ENCODE measurements at regions of chr6 and their contacts with region 1.

Region 1: DNA sequence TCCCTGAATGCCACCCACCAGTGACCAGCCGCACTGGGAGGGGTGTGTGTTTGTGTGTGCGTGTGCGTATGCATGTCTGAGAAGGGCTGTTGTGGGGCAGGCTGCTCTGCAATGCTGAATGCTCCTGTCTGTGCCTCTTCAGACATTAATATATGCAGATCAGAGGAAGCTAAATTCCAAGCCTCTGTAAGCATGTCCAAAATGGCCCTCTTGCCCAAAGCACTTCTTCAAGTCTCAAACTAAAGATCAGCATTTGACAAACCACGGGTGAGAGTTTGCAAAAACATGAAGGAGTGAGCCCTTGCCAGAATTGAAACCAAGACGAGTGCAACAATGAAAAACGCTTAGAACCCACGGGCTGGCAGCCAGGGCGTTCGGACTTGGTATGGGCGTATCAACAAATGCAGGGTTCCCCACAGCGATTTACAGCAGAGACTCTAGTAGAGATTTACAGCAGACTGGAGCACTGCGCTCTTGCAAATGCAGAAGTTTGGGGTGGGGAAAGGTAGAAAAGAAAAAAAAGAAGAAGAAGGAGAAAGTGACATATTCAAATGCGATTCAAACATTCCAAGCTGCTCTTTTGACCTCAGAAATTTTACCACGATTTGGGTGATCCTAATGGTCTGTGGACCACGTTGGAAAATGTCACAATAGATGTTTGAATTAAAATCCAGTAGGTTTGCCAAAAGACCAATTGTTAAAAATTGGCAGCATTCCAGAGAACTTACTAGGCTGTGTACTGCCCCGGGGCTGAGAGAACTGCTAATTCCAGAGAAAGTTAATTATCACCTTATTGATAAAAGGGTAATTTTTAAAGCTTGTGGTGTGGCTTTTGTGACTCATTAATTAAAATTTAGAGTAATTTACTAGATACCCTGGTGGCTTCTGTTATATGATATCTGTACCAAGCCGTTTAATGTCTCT is 3.5 kb downstream of the SCML4 start:
- DNase-seq: peak in 1 of 2 donors; percentile 70
- ATAC-seq: peak in 1 of 3 donors; percentile 10
- H3K4me3 ChIP-seq: peak overlapping the region; percentile 16
- H3K4me3 Mint-ChIP-seq: peak overlapping the region; percentile 98
- H3K27ac ChIP-seq: peak overlapping the region; percentile 96
- H3K27ac Mint-ChIP-seq: peak overlapping the region; percentile 89 to 100
- H3K4me1 ChIP-seq: peaks cover 50% of the 10 kb centered on the region
- H3K4me1 Mint-ChIP-seq: peaks cover 76 to 82% of the 10 kb centered on the region in 2 donors
- H3K27me3 ChIP-seq: no peaks in the 10 kb centered on the region
- H3K27me3 Mint-ChIP-seq: no peaks in the 10 kb centered on the region
- CTCF ChIP-seq: no peak

Region 2: GRCh38 chr6:107716688-107717089 is 103.9 kb before region 1 on chr6:
- intact Hi-C with region 1: loop called (anchors 2 kb)
- DNase-seq: peak; percentile 58 to 93
- ATAC-seq: peak; percentile 84 to 93 (median 87)
- H3K4me3 ChIP-seq: no peak overlapping the region
- H3K4me3 Mint-ChIP-seq: peak overlapping the region; percentile 76
- H3K27ac ChIP-seq: peak overlapping the region; percentile 86
- H3K27ac Mint-ChIP-seq: peak overlapping the region; percentile 90 to 91
- H3K4me1 ChIP-seq: peaks cover 63% of the 10 kb centered on the region
- H3K4me1 Mint-ChIP-seq: peaks cover 56 to 65% of the 10 kb centered on the region in 2 donors
- H3K27me3 ChIP-seq: no peaks in the 10 kb centered on the region
- H3K27me3 Mint-ChIP-seq: no peaks in the 10 kb centered on the region
- CTCF ChIP-seq: no peak

Region 3: DNA sequence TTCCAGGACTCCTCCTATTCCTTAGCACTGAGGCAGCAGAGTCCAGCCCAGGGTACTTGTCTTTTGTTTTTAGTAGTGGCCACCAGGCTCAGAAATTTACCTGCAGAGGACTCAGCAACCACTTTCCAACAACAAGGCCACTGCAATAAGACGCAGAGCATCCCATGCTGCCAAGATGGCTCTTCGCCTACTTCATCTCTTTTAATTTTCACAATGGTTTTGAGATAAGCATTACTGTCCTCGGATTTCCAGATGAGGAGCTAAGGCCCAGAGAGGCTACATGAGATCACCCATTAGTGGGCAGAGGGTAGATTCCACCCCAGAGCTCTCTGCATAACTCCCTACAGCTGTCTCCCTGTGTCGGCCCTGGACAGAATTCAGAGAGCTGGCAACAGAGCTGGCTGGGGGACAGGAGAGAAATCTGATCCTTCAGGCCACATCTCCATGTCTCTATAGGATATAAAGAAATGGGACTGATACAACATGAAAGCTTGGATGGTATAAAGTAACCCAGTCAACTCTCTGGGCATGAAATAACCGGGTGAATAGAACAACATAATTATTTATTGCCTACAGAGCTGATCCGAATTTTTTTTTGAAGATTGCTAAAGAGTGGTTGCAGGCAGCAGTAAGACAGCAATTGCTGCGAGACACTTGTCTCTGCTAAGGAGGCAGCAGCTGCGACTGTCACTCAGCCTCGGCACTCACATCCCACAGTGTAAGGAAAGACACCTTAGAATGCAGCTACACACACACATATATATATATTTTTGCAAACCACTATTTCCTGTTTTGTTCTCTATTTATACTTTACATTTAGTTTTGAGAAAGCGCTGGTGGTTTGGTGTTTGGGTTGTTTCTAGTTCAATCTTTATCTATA is 33.7 kb before region 1 on chr6:
- intact Hi-C with region 1: loop called (anchors 5 kb)
- DNase-seq: peak in 1 of 2 donors; percentile 70
- ATAC-seq: peak; percentile 80 to 87 (median 85)
- H3K4me3 ChIP-seq: no peak overlapping the region
- H3K4me3 Mint-ChIP-seq: peak overlapping the region; percentile 77
- H3K27ac ChIP-seq: peak overlapping the region; percentile 50
- H3K27ac Mint-ChIP-seq: peak overlapping the region; percentile 84 to 87
- H3K4me1 ChIP-seq: peaks cover 65% of the 10 kb centered on the region
- H3K4me1 Mint-ChIP-seq: peaks cover 61 to 70% of the 10 kb centered on the region in 2 donors
- H3K27me3 ChIP-seq: no peaks in the 10 kb centered on the region
- H3K27me3 Mint-ChIP-seq: no peaks in the 10 kb centered on the region
- CTCF ChIP-seq: no peak

Region 4: GRCh38 chr6:108558372-108559096 is 737.9 kb after region 1 on chr6:
- intact Hi-C with region 1: loop called (anchors 5 kb)
- DNase-seq: peak; percentile 97 to 99
- ATAC-seq: peak; percentile 59 to 80 (median 66)
- H3K4me3 ChIP-seq: peak overlapping the region; percentile 96
- H3K4me3 Mint-ChIP-seq: peak overlapping the region; percentile 96
- H3K27ac ChIP-seq: peak overlapping the region; percentile 100
- H3K27ac Mint-ChIP-seq: peak overlapping the region; percentile 97 to 98
- H3K4me1 ChIP-seq: peaks cover 21% of the 10 kb centered on the region
- H3K4me1 Mint-ChIP-seq: peaks cover 20 to 27% of the 10 kb centered on the region in 2 donors
- H3K27me3 ChIP-seq: no peaks in the 10 kb centered on the region
- H3K27me3 Mint-ChIP-seq: no peaks in the 10 kb centered on the region
- CTCF ChIP-seq: no peak

Measured in natural killer cell (primary cell).